ENCODE measurements at regions of chr11 and their contacts with region 1.

Region 1: DNA sequence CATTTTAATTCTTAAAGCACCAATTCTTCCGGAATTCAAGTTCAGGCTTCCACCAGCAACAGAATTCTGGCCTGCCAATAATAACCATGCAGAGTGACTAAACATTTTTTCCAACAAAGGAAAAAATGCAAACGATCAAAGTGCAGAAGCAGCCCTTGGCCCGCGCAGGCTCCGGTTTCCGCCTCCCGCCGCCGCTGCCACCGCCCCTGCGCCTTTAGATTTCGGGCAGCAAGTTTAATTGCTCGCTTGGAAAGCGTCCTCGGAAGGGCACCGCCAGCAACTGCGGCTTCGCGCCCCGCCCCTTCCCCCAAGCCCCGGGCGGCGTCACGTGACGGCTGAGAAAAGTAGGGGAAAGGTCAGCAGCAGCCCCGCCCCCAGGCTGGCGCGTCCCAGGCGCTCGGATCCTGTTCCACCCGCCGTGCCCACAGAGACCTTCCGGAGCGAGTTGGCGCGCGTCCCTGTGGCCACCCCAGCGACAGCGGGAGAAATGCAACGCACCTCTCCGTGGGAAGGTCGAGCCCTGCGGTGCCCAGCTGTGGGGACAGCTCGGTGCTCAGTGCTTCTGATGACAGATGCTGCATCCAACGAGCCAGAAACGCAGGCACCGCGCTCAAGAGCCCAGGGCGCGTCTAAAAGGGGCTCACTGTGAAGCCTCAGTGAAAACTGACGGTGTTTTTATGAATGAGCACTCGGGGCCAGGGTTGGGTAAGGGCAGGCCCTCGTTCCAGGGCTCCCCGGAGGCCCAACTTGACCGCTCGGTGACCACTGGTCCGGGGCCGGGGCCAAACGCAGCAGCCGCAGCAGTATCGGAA is 2.5 kb downstream of the CPT1A start:
- DNase-seq: peak; percentile 97 to 98
- ATAC-seq: peak; percentile 87 to 93 (median 88)
- H3K4me3 ChIP-seq: peak overlapping the region; percentile 80
- H3K27ac ChIP-seq: peak overlapping the region; percentile 94
- H3K4me1 ChIP-seq: peaks cover 43% of the 10 kb centered on the region
- H3K27me3 ChIP-seq: no peaks in the 10 kb centered on the region
- CTCF ChIP-seq: no peak

Region 2: GRCh38 chr11:68810164-68810563 is 29.1 kb before region 1 on chr11:
- intact Hi-C with region 1: loop called (anchors 2 kb)
- DNase-seq: peak; percentile 80 to 90
- ATAC-seq: peak; percentile 88 to 94 (median 92)
- H3K4me3 ChIP-seq: no peak overlapping the region
- H3K27ac ChIP-seq: peak overlapping the region; percentile 81
- H3K4me1 ChIP-seq: peaks cover 16% of the 10 kb centered on the region
- H3K27me3 ChIP-seq: no peaks in the 10 kb centered on the region
- CTCF ChIP-seq: no peak

Region 3: DNA sequence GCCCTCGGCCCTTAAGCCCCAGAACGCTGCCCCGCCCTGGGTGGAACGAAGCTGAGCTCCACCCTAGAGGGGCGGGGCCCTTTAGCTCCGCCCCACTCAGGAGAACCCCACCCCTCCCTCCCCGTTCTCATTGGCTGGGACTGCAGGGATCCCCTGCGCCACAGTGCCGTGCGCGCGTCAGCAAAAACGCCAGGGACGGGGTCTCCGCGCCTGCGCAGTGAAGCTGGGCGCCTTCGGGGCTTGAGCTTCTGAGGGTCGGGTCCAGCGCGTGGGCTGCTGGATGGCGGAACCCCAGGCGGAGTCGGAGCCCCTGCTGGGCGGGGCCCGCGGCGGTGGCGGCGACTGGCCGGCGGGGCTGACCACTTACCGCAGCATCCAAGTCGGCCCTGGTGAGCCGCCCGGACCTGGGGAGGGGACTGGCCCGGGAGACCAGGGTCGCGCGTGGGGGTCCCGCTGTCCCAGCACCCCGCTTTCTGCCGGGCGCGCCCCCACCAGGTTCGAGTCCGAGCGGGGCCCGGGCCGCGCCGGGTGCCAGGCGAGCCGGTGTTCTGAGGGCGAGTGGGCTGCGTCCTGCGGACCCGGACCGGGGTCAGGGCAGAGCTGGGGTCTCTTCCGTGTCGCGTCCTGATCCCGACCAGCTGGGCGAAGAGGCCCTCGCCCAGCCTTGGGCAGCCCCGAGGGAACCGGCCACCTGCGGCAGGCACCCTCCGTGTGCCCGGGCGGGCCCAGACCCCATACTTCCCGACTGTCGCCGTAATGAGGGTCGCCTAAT is 209.6 kb after region 1 on chr11 and contains the start of gene TPCN2:
- intact Hi-C with region 1: loop called in 1 of 2 experiments (anchors 10 kb)
- DNase-seq: peak; percentile 94 to 95
- ATAC-seq: peak; percentile 95 to 98 (median 96)
- H3K4me3 ChIP-seq: peak within 1 kb of the TSS; percentile 81
- H3K27ac ChIP-seq: peak within 1 kb of the TSS; percentile 77
- H3K4me1 ChIP-seq: peaks cover 26% of the 10 kb centered on the region
- H3K27me3 ChIP-seq: no peaks in the 10 kb centered on the region
- CTCF ChIP-seq: no peak
- total RNA-seq, gene TPCN2: 3.5 to 6.0 (median 3.9) TPM

Region 4: DNA sequence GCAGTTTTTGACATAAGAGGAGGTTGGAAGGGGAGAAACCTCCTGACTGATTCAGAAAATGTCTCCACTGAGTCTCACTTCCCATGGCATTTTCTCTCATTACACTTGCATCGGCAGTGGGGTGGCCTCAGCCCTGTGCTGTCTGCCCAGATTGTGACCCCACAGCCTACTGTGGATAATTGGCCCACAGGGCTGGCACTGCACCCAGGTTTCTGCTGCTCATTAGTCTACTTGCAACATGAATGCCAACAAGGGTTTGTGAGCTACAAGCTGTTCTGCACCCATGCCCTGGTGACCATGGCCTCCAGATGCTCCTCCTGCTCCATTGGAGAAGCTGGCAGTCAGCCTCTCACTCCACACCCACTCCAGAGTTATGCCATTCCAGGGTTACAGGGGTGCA is 1855.1 kb after region 1 on chr11:
- intact Hi-C with region 1: no loop called
- DNase-seq: no peak
- ATAC-seq: no peak
- H3K4me3 ChIP-seq: no peak overlapping the region
- H3K27ac ChIP-seq: no peak overlapping the region
- H3K4me1 ChIP-seq: no peaks in the 10 kb centered on the region
- H3K27me3 ChIP-seq: peaks cover 0 to 4% (median 0%) of the 10 kb centered on the region in 3 donors
- CTCF ChIP-seq: no peak

Measured in psoas muscle (tissue), 8 donors.